Gastrocnemius medialis (tissue), 4 donors: ENCODE measurements at regions of chr9 and their contacts with region 1.

Region 1: GRCh38 chr9:134325817-134326723 is at the start of gene RXRA:
- DNase-seq: peak; percentile 77 to 87
- ATAC-seq: peak; percentile 27 to 43
- H3K4me3 ChIP-seq: peak within 1 kb of the TSS; percentile 79 to 95 (median 88)
- H3K27ac ChIP-seq: peak within 1 kb of the TSS; percentile 94 to 100 (median 97)
- H3K4me1 ChIP-seq: peaks cover 40 to 46% of the 10 kb centered on the region in 2 donors
- H3K27me3 ChIP-seq: no peaks in the 10 kb centered on the region
- CTCF ChIP-seq: peak in 1 of 5 experiments; percentile 25
- POLR2A ChIP-seq: peak; percentile 93 to 96
- total RNA-seq, gene RXRA: 70.8 to 224 (median 160) TPM

Region 2: DNA sequence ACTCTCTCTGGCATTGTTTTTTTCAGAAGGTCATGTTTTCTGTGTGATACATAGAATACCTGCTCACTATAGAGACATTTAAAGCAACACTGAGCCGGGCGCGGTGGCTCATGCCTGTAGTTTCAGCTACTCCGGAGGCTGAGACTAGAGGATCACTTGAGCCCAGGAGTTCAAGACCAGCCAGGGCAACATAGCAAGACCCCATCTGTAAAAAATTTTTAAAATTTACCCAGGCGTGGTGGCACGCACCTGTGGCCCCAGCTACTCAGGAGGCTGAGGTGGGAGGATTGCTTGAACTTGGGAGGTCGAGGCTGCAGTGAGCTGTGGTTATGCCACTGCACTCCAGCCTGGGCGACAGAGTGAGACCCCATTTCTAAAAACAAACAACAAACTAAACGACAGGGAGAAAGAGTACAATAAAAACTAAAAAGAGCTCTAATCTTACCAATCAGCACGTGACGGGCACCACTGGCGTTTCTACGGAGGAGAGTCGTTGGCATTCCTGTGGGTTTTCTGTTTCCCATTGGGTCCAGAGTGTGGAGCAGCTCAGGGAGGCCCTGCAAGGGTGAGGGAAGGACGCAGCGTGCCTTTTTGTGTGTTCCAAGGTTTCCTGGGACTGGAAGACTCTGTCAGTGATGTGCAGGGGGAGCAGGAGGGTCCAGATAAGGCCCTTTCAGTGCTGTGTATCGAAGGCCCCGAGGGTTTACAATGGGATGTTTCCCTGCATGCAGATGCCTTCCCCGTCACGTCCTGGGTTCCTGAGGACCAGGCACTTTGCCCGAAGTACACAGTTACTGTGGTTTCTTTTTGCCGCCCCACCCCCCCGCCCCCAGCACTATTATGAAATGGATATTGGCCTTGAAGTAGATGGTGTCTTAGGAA is 154.5 kb before region 1 on chr9:
- in situ Hi-C with region 1: loop called in 2 of 4 experiments (anchors 10 to 25 kb)
- intact Hi-C with region 1: loop called (anchors 2 kb)
- DNase-seq: peak in 1 of 2 donors; percentile 47
- ATAC-seq: peak in 1 of 2 donors; percentile 13
- H3K4me3 ChIP-seq: no peak overlapping the region
- H3K27ac ChIP-seq: peak overlapping the region in 3 of 4 donors; percentile 19 to 64 (median 63)
- H3K4me1 ChIP-seq: peaks cover 16 to 20% of the 10 kb centered on the region in 2 donors
- H3K27me3 ChIP-seq: no peaks in the 10 kb centered on the region
- CTCF ChIP-seq: no peak
- POLR2A ChIP-seq: no peak

Region 3: GRCh38 chr9:134267881-134268724 is 58.0 kb before region 1 on chr9:
- in situ Hi-C with region 1: no loop called
- intact Hi-C with region 1: loop called (anchors 1 kb)
- DNase-seq: peak; percentile 34 to 51
- ATAC-seq: peak; percentile 73 to 78
- H3K4me3 ChIP-seq: no peak overlapping the region
- H3K27ac ChIP-seq: peak overlapping the region; percentile 38 to 75 (median 56)
- H3K4me1 ChIP-seq: peaks cover 7 to 22% of the 10 kb centered on the region in 2 donors
- H3K27me3 ChIP-seq: no peaks in the 10 kb centered on the region
- CTCF ChIP-seq: no peak
- POLR2A ChIP-seq: no peak

Region 4: GRCh38 chr9:134365791-134366688 is 40.0 kb after region 1 on chr9:
- in situ Hi-C with region 1: no loop called
- intact Hi-C with region 1: loop called (anchors 1 kb)
- DNase-seq: peak; percentile 92 to 97
- ATAC-seq: peak; percentile 80
- H3K4me3 ChIP-seq: peak overlapping the region; percentile 30 to 41 (median 38)
- H3K27ac ChIP-seq: peak overlapping the region; percentile 92 to 97 (median 96)
- H3K4me1 ChIP-seq: peaks cover 85 to 87% of the 10 kb centered on the region in 2 donors
- H3K27me3 ChIP-seq: no peaks in the 10 kb centered on the region
- CTCF ChIP-seq: peak in 2 of 5 experiments; percentile 31 to 47
- POLR2A ChIP-seq: peak in 1 of 2 donors; percentile 92

Region 5: DNA sequence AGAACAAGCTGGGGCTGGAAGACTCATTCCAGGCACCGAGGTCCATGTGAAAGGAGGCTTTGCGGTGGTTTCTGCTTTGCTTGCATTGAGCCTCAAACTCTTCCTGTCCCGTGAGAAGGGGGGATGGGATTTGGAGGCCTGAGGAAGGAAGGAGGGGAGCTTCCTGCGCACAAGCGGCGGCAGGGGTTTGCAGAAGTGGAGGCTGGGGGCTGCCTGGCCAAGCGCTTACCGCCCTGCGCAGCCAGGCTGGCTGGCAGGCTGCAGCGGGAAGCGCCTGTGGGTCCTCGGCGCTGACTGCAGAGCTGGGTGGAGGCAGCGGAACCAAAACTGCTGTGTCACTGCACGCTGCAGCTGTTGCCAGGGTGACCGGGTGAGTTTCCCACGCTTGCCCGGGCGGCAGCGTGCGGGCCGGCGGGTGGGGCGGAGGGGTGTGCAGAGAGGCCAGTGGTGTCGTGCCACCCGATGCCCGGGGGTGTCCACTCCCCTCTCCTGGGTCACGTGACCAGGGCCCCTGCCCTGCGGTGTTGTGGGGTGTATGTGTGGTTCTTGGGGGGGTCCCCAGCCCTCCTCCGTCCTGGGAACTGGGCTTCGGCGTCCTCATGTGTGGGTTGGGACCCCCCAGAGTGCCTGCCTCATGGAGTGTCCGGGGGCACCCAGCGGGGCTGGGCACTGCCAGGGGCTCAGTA is 81.2 kb after region 1 on chr9:
- in situ Hi-C with region 1: no loop called
- intact Hi-C with region 1: no loop called
- DNase-seq: peak; percentile 83 to 92
- ATAC-seq: peak; percentile 17 to 20
- H3K4me3 ChIP-seq: peak overlapping the region; percentile 47 to 55 (median 52)
- H3K27ac ChIP-seq: peak overlapping the region; percentile 90 to 98 (median 98)
- H3K4me1 ChIP-seq: peaks cover 98 to 100% of the 10 kb centered on the region in 2 donors
- H3K27me3 ChIP-seq: no peaks in the 10 kb centered on the region
- CTCF ChIP-seq: no peak
- POLR2A ChIP-seq: peak in 1 of 2 donors; percentile 81

Region 6: DNA sequence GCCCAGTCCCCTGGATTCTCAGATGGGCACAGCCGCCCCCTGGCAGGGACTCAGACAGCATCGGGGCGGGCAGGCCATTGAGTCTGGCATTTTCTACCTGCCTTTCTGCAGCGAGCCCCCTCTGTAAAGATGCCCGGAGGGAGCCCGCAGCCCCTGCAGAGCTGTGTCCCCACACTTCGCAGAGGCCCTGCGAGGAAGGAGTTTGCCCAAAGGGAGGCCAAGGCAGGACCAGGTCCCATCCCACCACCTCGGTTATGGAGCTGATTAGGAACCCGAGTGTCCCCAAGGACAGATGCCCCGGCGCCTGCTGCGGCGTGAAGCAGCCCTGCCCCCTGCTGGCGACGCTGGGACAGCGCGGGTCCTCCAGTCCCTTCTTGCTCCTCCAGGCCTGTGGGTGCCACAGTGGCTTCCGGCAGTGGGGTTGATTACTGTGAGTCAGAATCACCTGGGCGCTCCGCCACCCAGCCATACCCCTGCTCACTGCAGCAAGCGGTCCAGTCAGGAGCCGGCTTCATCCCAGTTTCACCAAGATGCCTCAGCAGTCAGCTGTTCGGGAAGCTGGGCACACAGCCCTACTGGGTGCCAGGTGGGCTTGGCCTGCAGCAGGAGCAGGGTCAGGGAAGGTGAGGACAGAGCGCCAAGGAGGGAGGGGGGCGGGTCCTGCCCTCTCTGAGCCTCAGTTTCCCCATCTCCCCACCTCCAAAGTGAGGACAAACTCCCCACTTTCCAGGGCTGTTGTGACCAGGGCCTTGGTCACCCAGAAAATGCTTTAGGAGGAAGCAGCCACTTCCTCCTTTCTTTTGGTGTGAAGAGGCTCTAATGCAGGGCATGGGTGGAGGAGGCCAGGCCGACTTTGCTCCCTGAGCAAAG is 117.3 kb after region 1 on chr9:
- in situ Hi-C with region 1: loop called in 2 of 4 experiments (anchors 10 to 25 kb)
- intact Hi-C with region 1: loop called (anchors 2 kb)
- DNase-seq: peak; percentile 91 to 97
- ATAC-seq: peak; percentile 68 to 77
- H3K4me3 ChIP-seq: no peak overlapping the region
- H3K27ac ChIP-seq: peak overlapping the region; percentile 66 to 80 (median 78)
- H3K4me1 ChIP-seq: peaks cover 45% of the 10 kb centered on the region in 2 donors
- H3K27me3 ChIP-seq: no peaks in the 10 kb centered on the region
- CTCF ChIP-seq: peak; percentile 97 to 100 (median 99)
- POLR2A ChIP-seq: peak in 1 of 2 donors; percentile 8

Region 7: DNA sequence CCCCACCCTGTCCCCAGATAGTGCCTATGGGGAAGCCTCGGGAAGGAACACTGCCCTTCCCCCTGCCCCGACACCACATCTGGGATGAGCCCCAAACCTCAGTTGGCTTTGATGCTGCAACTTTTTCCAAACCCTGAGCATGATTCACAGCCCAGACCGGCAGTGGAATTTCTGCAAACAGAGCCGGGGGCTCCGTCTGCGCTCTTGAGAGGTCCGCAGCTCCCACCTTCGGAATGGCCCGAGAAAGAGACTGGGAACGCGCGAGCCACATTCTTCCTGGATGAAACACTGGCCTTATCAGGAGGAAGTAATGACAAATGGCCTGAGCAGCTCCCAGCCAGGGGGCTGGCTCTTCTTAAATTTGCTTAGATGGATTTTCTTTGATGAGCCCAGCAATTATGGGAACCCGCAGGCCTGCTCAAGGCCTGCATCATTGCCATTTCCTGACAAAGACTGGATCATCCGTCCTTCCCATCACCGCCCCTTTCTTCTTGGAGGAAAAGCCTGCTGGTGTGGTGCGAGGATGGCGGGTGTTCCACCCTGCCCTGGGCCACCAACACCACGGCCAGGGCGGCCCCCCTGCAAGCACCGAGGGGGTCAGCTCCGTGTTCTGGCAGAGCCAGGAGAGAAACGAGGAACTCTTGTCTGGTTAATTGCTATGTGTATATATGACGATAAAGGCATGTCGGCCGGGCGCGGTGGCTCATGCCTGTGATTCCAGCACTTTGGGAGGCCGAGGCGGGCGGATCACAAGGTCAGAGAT is 276.7 kb after region 1 on chr9:
- in situ Hi-C with region 1: no loop called
- intact Hi-C with region 1: no loop called
- DNase-seq: peak in 1 of 2 donors; percentile 31
- ATAC-seq: peak in 1 of 2 donors; percentile 21
- H3K4me3 ChIP-seq: no peak overlapping the region
- H3K27ac ChIP-seq: no peak overlapping the region
- H3K4me1 ChIP-seq: no peaks in the 10 kb centered on the region
- H3K27me3 ChIP-seq: peaks cover 10 to 14% (median 11%) of the 10 kb centered on the region in 3 donors
- CTCF ChIP-seq: no peak
- POLR2A ChIP-seq: no peak